ENCODE measurements at regions of chr6 and their contacts with region 1.

Region 1: GRCh38 chr6:113632220-113632864 is 224.8 kb upstream of the MARCKS start:
- DNase-seq: no peak
- H3K4me3 Mint-ChIP-seq: no peak overlapping the region
- H3K27ac Mint-ChIP-seq: peak overlapping the region; percentile 49
- H3K4me1 Mint-ChIP-seq: peaks cover 17% of the 10 kb centered on the region
- H3K27me3 Mint-ChIP-seq: no peaks in the 10 kb centered on the region

Region 2: DNA sequence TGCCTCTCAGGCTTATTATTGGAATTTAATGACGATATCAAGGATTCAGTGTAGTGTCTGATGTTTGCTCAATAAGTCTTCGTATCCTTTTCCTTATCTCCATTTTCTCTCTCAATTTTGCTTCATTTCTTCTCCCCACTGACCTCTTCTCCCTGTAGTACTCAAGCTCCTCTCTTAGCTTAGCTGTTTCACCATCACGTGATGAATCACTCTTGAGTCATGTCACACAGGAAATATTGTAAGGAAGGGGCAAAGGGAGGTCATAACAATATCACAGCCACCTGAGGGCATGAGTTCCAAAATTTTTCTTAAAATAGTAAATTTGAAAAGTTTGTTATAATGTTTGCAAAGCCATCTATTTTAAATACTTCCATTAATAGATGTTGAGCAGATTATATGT is 167.4 kb before region 1 on chr6:
- intact Hi-C with region 1: no loop called
- DNase-seq: no peak
- H3K4me3 Mint-ChIP-seq: no peak overlapping the region
- H3K27ac Mint-ChIP-seq: no peak overlapping the region
- H3K4me1 Mint-ChIP-seq: no peaks in the 10 kb centered on the region
- H3K27me3 Mint-ChIP-seq: no peaks in the 10 kb centered on the region

Region 3: DNA sequence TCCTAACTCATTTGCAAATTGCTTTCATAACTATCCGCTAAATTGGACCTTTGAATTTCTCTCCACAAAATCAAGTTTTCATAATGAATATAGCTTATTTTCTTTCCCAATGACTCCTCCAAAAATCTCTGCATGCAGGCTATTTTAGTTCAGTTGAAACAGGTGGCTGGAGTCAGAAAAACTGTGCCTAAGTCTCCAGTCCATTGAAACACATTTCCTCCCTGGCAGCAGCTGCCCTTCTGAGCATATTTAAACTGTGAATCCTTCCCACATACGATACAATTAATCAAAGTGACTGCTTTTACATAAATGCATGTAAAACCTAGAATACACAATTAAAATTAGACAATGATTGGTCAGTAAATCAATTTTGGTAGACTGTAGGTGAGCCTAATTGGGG is 119.8 kb before region 1 on chr6:
- intact Hi-C with region 1: no loop called
- DNase-seq: no peak
- H3K4me3 Mint-ChIP-seq: no peak overlapping the region
- H3K27ac Mint-ChIP-seq: no peak overlapping the region
- H3K4me1 Mint-ChIP-seq: no peaks in the 10 kb centered on the region
- H3K27me3 Mint-ChIP-seq: no peaks in the 10 kb centered on the region

Region 4: DNA sequence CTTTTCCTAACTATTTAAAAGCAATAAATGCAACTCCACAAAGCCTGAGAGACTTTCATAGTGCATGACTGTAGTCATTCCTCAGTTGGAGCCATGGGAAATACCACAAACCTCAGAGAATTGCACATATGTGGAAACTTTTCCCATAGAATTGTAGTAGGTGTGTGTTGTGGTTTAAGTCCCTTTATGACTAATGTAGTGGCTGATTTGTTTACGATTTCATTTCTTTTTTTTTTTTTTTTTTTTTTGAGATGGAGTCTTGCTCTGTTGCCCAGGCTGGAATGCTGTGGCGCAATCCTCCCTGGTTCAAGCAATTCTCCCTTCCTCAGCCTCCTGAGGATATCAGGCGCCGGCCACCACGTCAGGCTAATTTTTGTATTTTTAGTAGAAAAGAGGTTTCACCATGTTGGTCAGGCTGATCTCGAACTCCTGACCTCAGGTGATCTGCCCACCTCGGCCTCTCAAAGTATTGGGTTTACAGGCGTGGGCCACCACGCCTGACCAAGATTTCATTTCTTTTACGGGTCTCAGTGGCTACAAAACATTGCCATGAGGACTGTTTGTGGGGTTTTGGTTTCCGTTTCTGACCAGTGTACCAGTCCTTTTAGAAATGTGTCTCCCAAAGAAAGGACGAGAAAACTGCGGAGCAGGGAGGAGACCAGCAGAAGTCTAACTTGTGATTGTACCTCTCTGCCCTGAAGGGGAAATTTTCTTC is 12.7 kb after region 1 on chr6:
- intact Hi-C with region 1: loop called (anchors 1 kb)
- DNase-seq: no peak
- H3K4me3 Mint-ChIP-seq: no peak overlapping the region
- H3K27ac Mint-ChIP-seq: no peak overlapping the region
- H3K4me1 Mint-ChIP-seq: no peaks in the 10 kb centered on the region
- H3K27me3 Mint-ChIP-seq: peaks cover 2% of the 10 kb centered on the region

Region 5: GRCh38 chr6:113970805-113971676 is 338.7 kb after region 1 on chr6 and contains the start of gene HDAC2:
- intact Hi-C with region 1: loop called (anchors 10 kb)
- DNase-seq: peak; percentile 80
- H3K4me3 Mint-ChIP-seq: peak within 1 kb of the TSS; percentile 97
- H3K27ac Mint-ChIP-seq: peak within 1 kb of the TSS; percentile 96
- H3K4me1 Mint-ChIP-seq: peaks cover 34% of the 10 kb centered on the region
- H3K27me3 Mint-ChIP-seq: peaks cover 4% of the 10 kb centered on the region
- total RNA-seq, gene HDAC2: 125 and 128 TPM in 2 replicates

Measured in activated T-helper 1 cell treated with anti-CD3 and anti-CD28 coated beads, Interleukin-12 subunit alpha, Interleukin-12 subunit beta, Interleukin-2, Interleukin-4 antibody, amounts not matched to agents 30 ng/mL and 10 ng/mL and 1 ng/mL, durations not matched to agents 14 hours and 24 hours and 36 hours (primary cell).